ENCODE measurements at regions of chr15 and their contacts with region 1.

Region 1: DNA sequence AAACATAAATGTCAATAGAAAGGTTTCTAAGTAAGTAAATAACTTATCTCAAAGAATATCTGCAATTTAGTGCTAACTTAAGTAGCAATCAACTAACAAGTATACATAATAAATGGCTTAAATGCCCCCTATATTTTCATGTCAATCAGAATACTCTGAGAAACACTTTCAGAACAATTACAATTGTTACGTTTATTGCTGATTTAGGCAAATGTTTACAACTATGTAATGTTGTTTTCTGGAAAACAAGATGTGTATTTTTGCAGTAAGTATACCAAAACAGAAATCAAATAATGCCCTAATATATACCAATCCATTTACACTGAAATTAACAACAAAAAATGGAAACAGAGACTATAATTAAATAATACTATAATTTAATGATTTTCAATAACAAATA is 13.2 kb downstream of the TUBGCP5 start:
- DNase-seq: no peak
- ATAC-seq: no peak
- H3K4me3 ChIP-seq: no peak overlapping the region
- H3K4me3 Mint-ChIP-seq: no peak overlapping the region
- H3K27ac ChIP-seq: no peak overlapping the region
- H3K27ac Mint-ChIP-seq: no peak overlapping the region
- H3K4me1 ChIP-seq: no peaks in the 10 kb centered on the region
- H3K4me1 Mint-ChIP-seq: no peaks in the 10 kb centered on the region
- H3K27me3 ChIP-seq: no peaks in the 10 kb centered on the region
- H3K27me3 Mint-ChIP-seq: no peaks in the 10 kb centered on the region
- CTCF ChIP-seq: no peak

Region 2: GRCh38 chr15:23039151-23039916 is 13.1 kb after region 1 on chr15 and contains the start of gene TUBGCP5:
- CTCF ChIA-PET with region 1: interaction called, 10 read pairs
- POLR2A ChIA-PET with region 1: interaction called, 10 read pairs
- intact Hi-C with region 1: no loop called
- DNase-seq: peak; percentile 88 to 98 (median 96)
- ATAC-seq: peak; percentile 93
- H3K4me3 ChIP-seq: peak within 1 kb of the TSS; percentile 65 to 81
- H3K4me3 Mint-ChIP-seq: peak within 1 kb of the TSS; percentile 93
- H3K27ac ChIP-seq: peak within 1 kb of the TSS; percentile 40 to 79
- H3K27ac Mint-ChIP-seq: peak within 1 kb of the TSS; percentile 94
- H3K4me1 ChIP-seq: peaks cover 18% of the 10 kb centered on the region
- H3K4me1 Mint-ChIP-seq: peaks cover 26% of the 10 kb centered on the region
- H3K27me3 ChIP-seq: no peaks in the 10 kb centered on the region
- H3K27me3 Mint-ChIP-seq: no peaks in the 10 kb centered on the region
- CTCF ChIP-seq: no peak
- total RNA-seq, gene TUBGCP5: 34.4 to 38.5 TPM

Measured in CD8-positive, alpha-beta T cell (primary cell).